Panc1 (cell line): ENCODE measurements at regions of chr11 and their contacts with region 1.

Region 1: DNA sequence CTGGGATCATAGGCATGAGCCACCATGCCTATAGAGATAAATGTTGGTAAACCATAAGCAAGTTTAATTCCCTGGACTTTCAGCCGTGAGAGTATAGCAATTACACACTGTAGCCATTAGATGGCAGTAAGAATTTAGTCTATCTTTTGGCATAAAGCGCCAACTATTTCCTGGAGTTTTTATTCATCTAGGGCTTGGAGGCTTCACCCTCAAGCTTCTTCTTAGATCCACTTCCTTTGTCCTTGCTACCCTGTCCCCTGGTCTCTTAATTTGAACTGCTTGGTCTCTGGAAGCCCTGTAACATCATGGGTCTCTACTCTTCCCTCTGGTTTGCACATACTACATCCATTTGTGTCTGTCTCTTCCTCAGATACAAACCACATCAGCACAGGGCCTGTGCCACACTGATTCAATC is 38.2 kb downstream of the OR10A6 start:
- DNase-seq: peak; percentile 63
- ATAC-seq: peak; percentile 86
- H3K4me3 ChIP-seq: no peak overlapping the region
- H3K27ac ChIP-seq: peak overlapping the region; percentile 45; the same call in 1 of the 2 replicates
- H3K4me1 ChIP-seq: 0 out of 2 replicates have a peak, but pooled peaks cover 3% of the 10 kb centered on the region
- H3K27me3 ChIP-seq: no peaks in the 10 kb centered on the region; the same call in 1 of the 2 replicates
- CTCF ChIP-seq: peak; percentile 93

Region 2: GRCh38 chr11:7775689-7776088 is 117.2 kb before region 1 on chr11:
- CTCF ChIA-PET with region 1: no interaction called
- POLR2A ChIA-PET with region 1: no interaction called
- in situ Hi-C with region 1: no loop called
- intact Hi-C with region 1: no loop called
- DNase-seq: no peak
- ATAC-seq: no peak
- H3K4me3 ChIP-seq: no peak overlapping the region
- H3K27ac ChIP-seq: no peak overlapping the region
- H3K4me1 ChIP-seq: no peaks in the 10 kb centered on the region
- H3K27me3 ChIP-seq: no peaks in the 10 kb centered on the region
- CTCF ChIP-seq: peak; percentile 17

Region 3: DNA sequence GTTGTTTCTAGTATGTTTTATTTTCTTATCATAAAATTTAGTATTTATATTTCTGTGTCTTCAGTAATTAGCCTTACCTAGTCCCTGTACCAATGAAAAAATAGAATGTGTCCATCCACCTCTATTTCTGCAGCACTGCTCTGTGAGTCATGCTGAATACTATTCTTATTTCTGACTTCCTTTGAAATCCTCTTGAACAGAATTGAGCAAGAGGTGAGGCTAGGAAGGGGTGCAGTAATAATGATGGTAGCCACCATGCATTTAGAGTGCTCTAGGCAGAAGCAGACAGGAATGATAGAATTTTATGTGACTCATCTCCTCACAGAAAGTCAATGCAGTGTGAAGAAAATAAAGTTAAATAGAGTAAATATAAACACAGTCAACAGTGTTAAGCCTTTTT is 21.8 kb before region 1 on chr11:
- CTCF ChIA-PET with region 1: no interaction called
- POLR2A ChIA-PET with region 1: no interaction called
- in situ Hi-C with region 1: no loop called
- intact Hi-C with region 1: no loop called
- DNase-seq: no peak
- ATAC-seq: no peak
- H3K4me3 ChIP-seq: no peak overlapping the region
- H3K27ac ChIP-seq: no peak overlapping the region
- H3K4me1 ChIP-seq: no peaks in the 10 kb centered on the region
- H3K27me3 ChIP-seq: no peaks in the 10 kb centered on the region; the same call in 1 of the 2 replicates
- CTCF ChIP-seq: no peak

Region 4: GRCh38 chr11:7977232-7977917 is 84.5 kb after region 1 on chr11:
- CTCF ChIA-PET with region 1: no interaction called
- POLR2A ChIA-PET with region 1: no interaction called
- in situ Hi-C with region 1: loop called (anchors 5 kb)
- intact Hi-C with region 1: no loop called
- DNase-seq: peak; percentile 78
- ATAC-seq: peak; percentile 88
- H3K4me3 ChIP-seq: peak overlapping the region in 1 of 2 experiments; percentile 23; a peak in 2 of 4 replicates
- H3K27ac ChIP-seq: peak overlapping the region; percentile 59; the same call in 1 of the 2 replicates
- H3K4me1 ChIP-seq: peaks cover 9% of the 10 kb centered on the region; the same call in 1 of the 2 replicates
- H3K27me3 ChIP-seq: no peaks in the 10 kb centered on the region
- CTCF ChIP-seq: no peak

Region 5: GRCh38 chr11:7986768-7987559 is 94.1 kb after region 1 on chr11 and contains the start of gene EIF3F:
- CTCF ChIA-PET with region 1: interaction called, 23 read pairs
- POLR2A ChIA-PET with region 1: interaction called, 4 read pairs
- in situ Hi-C with region 1: no loop called
- intact Hi-C with region 1: loop called (anchors 1 kb)
- DNase-seq: peak; percentile 100
- ATAC-seq: peak; percentile 100
- H3K4me3 ChIP-seq: peak within 1 kb of the TSS; percentile 85
- H3K27ac ChIP-seq: peak within 1 kb of the TSS; percentile 95
- H3K4me1 ChIP-seq: peaks cover 21% of the 10 kb centered on the region
- H3K27me3 ChIP-seq: no peaks in the 10 kb centered on the region
- CTCF ChIP-seq: peak; percentile 98
- total RNA-seq, gene EIF3F: 387 TPM

Region 6: DNA sequence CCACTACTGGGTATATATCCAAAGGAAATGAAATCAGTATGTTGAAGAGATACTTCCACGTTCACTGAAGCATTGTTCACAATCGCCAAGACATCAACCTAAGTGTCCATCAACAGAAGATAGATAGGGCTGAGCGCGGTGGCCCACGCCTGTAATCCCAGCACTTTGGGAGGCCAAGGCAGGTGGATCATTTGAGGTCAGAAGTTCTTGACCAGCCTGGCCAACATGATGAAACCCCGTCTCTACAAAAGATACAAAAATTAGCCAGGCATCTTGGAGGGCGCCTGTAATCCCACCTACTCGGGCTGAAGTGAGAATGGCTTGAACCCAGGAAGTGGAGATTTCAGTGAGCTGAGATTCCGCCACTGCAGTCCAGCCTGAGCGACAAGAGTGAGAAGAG is 106.9 kb after region 1 on chr11:
- CTCF ChIA-PET with region 1: no interaction called
- POLR2A ChIA-PET with region 1: no interaction called
- in situ Hi-C with region 1: no loop called
- intact Hi-C with region 1: no loop called
- DNase-seq: no peak
- ATAC-seq: no peak
- H3K4me3 ChIP-seq: no peak overlapping the region
- H3K27ac ChIP-seq: no peak overlapping the region
- H3K4me1 ChIP-seq: no peaks in the 10 kb centered on the region
- H3K27me3 ChIP-seq: no peaks in the 10 kb centered on the region
- CTCF ChIP-seq: no peak

Region 7: DNA sequence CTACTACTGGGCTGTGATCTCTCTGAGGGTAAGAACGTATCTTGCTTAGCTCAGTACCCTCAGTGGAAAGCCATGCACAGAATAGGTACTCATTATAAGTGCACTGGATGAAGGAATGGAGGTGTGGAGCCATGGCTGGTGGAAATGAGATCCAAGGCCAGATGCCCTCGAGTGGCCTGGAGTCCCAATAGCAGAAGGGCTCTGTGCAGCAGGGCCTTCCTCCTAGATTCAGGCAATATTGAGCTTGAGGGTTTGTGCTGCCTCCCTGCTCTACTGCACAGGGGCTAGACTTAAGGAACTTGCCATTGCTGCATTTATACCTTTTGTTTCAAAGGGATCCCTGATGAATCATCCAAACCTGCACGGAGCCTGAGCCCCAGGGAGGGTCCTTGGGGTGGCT is 154.5 kb after region 1 on chr11:
- CTCF ChIA-PET with region 1: no interaction called
- POLR2A ChIA-PET with region 1: no interaction called
- in situ Hi-C with region 1: no loop called
- intact Hi-C with region 1: no loop called
- DNase-seq: no peak
- ATAC-seq: no peak
- H3K4me3 ChIP-seq: no peak overlapping the region
- H3K27ac ChIP-seq: no peak overlapping the region
- H3K4me1 ChIP-seq: no peaks in the 10 kb centered on the region
- H3K27me3 ChIP-seq: peaks cover 34% of the 10 kb centered on the region
- CTCF ChIP-seq: no peak

Region 8: GRCh38 chr11:8099291-8099899 is 206.5 kb after region 1 on chr11:
- CTCF ChIA-PET with region 1: no interaction called
- POLR2A ChIA-PET with region 1: no interaction called
- in situ Hi-C with region 1: no loop called
- intact Hi-C with region 1: loop called (anchors 10 kb)
- DNase-seq: peak; percentile 84
- ATAC-seq: peak; percentile 89
- H3K4me3 ChIP-seq: no peak overlapping the region
- H3K27ac ChIP-seq: no peak overlapping the region
- H3K4me1 ChIP-seq: no peaks in the 10 kb centered on the region
- H3K27me3 ChIP-seq: no peaks in the 10 kb centered on the region
- CTCF ChIP-seq: peak; percentile 95